Thyroid gland (tissue), 4 donors: ENCODE measurements at regions of chr20 and their contacts with region 1.

Region 1: GRCh38 chr20:49713753-49714712 is at the start of gene B4GALT5:
- DNase-seq: peak; percentile 72 to 75
- H3K4me3 ChIP-seq: peak within 1 kb of the TSS; percentile 48 to 94 (median 75)
- H3K27ac ChIP-seq: peak within 1 kb of the TSS; percentile 56 to 82 (median 74)
- H3K4me1 ChIP-seq: peaks cover 14 to 18% of the 10 kb centered on the region in 2 donors
- H3K27me3 ChIP-seq: no peaks in the 10 kb centered on the region
- CTCF ChIP-seq: no peak
- POLR2A ChIP-seq: peak in 1 of 2 donors; percentile 77
- total RNA-seq, gene B4GALT5: 11.5 to 22.2 (median 17.6) TPM

Region 2: GRCh38 chr20:49620364-49621240 is 93.4 kb before region 1 on chr20:
- intact Hi-C with region 1: loop called (anchors 10 kb)
- DNase-seq: no peak
- H3K4me3 ChIP-seq: no peak overlapping the region
- H3K27ac ChIP-seq: peak overlapping the region in 1 of 3 donors; percentile 35
- H3K4me1 ChIP-seq: peaks cover 0 to 4% of the 10 kb centered on the region in 2 donors
- H3K27me3 ChIP-seq: no peaks in the 10 kb centered on the region
- CTCF ChIP-seq: no peak
- POLR2A ChIP-seq: no peak

Region 3: GRCh38 chr20:49821870-49822331 is 107.9 kb after region 1 on chr20:
- intact Hi-C with region 1: loop called (anchors 5 kb)
- DNase-seq: peak; percentile 21 to 47
- H3K4me3 ChIP-seq: no peak overlapping the region
- H3K27ac ChIP-seq: peak overlapping the region in 2 of 3 donors; percentile 53 to 63
- H3K4me1 ChIP-seq: peaks cover 35 to 57% of the 10 kb centered on the region in 2 donors
- H3K27me3 ChIP-seq: no peaks in the 10 kb centered on the region
- CTCF ChIP-seq: peak in 1 of 6 experiments; percentile 19
- POLR2A ChIP-seq: no peak